ENCODE measurements at regions of chr1 and their contacts with region 1.

Region 1: GRCh38 chr1:211514030-211514754 is 22.2 kb upstream of the RD3 start:
- DNase-seq: peak; percentile 99
- H3K4me3 Mint-ChIP-seq: no peak overlapping the region
- H3K27ac Mint-ChIP-seq: peak overlapping the region; percentile 7
- H3K4me1 Mint-ChIP-seq: peaks cover 41% of the 10 kb centered on the region
- H3K27me3 Mint-ChIP-seq: no peaks in the 10 kb centered on the region
- CTCF ChIP-seq: peak; percentile 96

Region 2: GRCh38 chr1:210407207-210407886 is 1106.8 kb before region 1 on chr1:
- CTCF ChIA-PET with region 1: interaction called, 13 read pairs
- POLR2A ChIA-PET with region 1: no interaction called
- intact Hi-C with region 1: loop called (anchors 2 kb)
- DNase-seq: peak; percentile 84
- H3K4me3 Mint-ChIP-seq: no peak overlapping the region
- H3K27ac Mint-ChIP-seq: no peak overlapping the region
- H3K4me1 Mint-ChIP-seq: no peaks in the 10 kb centered on the region
- H3K27me3 Mint-ChIP-seq: no peaks in the 10 kb centered on the region
- CTCF ChIP-seq: peak; percentile 100

Region 3: DNA sequence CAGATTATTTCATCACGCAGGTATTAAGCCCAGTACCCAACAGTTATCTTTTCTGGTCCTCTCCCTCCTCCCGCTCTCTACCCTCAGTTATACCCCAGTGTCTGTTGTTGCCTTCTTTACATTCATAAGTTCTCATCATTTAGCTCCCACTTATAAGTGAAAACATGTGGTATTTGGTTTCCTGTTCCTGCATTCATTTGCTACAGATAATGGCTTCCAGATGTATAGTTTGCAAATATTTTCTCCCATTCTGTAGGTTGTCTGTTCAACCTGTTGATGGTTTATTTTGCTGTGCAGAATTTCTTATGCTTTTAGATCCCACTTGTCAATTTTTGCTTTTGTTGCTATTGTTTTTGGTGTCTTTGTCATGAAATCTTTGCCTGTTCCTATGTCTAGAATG is 359.2 kb before region 1 on chr1:
- CTCF ChIA-PET with region 1: no interaction called
- POLR2A ChIA-PET with region 1: no interaction called
- intact Hi-C with region 1: loop called (anchors 5 kb)
- DNase-seq: no peak
- H3K4me3 Mint-ChIP-seq: no peak overlapping the region
- H3K27ac Mint-ChIP-seq: no peak overlapping the region
- H3K4me1 Mint-ChIP-seq: no peaks in the 10 kb centered on the region
- H3K27me3 Mint-ChIP-seq: peaks cover 23% of the 10 kb centered on the region
- CTCF ChIP-seq: no peak

Region 4: GRCh38 chr1:211352985-211353515 is 161.1 kb before region 1 on chr1:
- CTCF ChIA-PET with region 1: interaction called, 13 read pairs
- POLR2A ChIA-PET with region 1: no interaction called
- intact Hi-C with region 1: no loop called
- DNase-seq: peak; percentile 78
- H3K4me3 Mint-ChIP-seq: no peak overlapping the region
- H3K27ac Mint-ChIP-seq: no peak overlapping the region
- H3K4me1 Mint-ChIP-seq: peaks cover 15% of the 10 kb centered on the region
- H3K27me3 Mint-ChIP-seq: no peaks in the 10 kb centered on the region
- CTCF ChIP-seq: peak; percentile 93

Region 5: GRCh38 chr1:211501711-211502400 is 12.3 kb before region 1 on chr1:
- CTCF ChIA-PET with region 1: interaction called, 111 read pairs
- POLR2A ChIA-PET with region 1: interaction called, 4 read pairs
- intact Hi-C with region 1: no loop called
- DNase-seq: no peak
- H3K4me3 Mint-ChIP-seq: no peak overlapping the region
- H3K27ac Mint-ChIP-seq: no peak overlapping the region
- H3K4me1 Mint-ChIP-seq: no peaks in the 10 kb centered on the region
- H3K27me3 Mint-ChIP-seq: no peaks in the 10 kb centered on the region
- CTCF ChIP-seq: no peak

Region 6: DNA sequence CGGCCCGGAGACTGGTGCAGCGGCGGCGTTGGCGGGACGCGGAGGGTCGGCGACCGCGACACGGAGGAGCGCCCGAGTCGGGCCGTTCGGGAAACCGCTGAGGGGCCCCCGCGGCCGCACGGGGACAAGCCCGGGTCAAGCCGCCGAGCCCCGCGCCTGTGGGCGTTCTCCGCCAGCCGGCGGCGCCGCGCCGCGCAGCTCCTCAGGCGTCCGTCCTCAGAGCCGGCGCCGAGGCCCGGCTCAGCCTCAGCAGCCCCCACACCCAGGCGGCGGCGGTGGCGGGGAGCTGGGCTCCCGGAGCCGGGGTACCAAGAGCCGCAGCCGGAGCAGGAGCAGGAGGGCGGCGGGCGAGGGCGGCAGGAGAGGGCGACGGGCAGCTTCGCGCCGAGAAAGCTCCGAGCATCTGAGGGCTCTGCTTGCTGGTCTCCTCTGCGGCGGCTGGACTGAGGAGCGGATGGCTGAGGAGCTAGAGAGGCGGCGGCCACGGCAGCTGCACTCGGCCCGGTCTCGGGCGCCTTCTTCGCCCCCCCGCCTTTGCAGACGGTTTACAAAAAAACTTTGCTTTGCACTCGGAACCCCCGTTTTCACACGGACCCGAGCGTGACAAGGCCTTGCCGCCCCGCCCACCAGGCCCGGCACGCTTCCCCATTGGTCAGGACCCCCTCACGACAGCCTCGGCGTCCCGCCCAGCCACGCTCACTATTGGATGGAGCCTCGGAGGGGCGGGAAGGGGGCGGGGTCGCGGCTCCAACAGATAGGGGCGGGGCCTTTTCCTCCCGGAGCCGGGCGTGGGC is 64.6 kb after region 1 on chr1 and contains the start of gene SLC30A1:
- CTCF ChIA-PET with region 1: interaction called, 31 read pairs
- POLR2A ChIA-PET with region 1: interaction called, 24 read pairs
- intact Hi-C with region 1: loop called (anchors 1 kb)
- DNase-seq: peak; percentile 100
- H3K4me3 Mint-ChIP-seq: peak within 1 kb of the TSS; percentile 89
- H3K27ac Mint-ChIP-seq: peak within 1 kb of the TSS; percentile 96
- H3K4me1 Mint-ChIP-seq: peaks cover 48% of the 10 kb centered on the region
- H3K27me3 Mint-ChIP-seq: no peaks in the 10 kb centered on the region
- CTCF ChIP-seq: no peak
- total RNA-seq, gene SLC30A1: 87.0 and 94.1 TPM in 2 replicates

Region 7: DNA sequence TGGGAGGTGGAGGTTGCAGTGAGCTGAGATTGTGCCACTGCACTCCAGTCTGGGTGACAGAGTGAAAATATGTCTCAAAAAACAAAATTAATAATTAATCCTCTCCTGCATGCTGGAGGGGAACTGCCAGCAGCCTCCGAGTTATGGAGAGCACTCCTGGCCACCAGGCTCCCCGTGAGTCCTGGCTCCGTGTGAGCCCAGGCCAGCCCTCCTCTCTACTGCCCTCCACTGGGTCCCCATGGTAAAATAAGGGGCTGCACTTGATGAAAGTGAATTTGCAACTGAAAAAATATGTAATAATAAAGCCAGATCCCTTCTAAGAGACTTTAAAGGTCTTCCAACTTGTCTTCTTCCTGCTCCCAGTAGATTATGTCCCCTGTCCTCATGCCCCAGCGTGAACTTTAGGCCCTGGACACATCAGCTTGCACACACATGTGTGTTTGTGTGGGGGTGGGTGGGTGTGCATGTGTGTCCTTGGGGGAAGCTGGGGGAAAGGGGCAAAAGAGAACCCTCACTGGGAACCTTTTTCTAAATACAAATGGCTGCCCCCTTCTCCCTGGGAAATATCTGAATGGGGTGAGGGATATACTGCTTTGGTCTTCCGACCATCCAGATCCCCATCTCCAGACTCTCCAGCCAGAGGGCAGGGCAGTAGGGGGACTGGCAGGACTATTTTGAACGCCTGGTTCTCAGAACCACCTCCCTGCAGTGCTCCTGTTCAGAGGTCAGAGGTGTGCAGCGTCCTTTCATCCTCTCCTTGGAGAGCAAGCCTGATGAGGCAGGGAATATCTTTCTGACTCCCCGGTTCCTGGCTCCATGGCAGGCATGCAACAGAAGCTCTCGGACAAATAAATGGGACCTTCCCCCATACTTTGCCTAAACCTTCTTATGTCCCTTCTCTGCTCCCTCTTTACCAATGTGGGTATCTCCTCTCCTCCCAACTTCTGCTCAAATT is 135.1 kb after region 1 on chr1:
- CTCF ChIA-PET with region 1: interaction called, 418 read pairs
- POLR2A ChIA-PET with region 1: interaction called, 19 read pairs
- intact Hi-C with region 1: no loop called
- DNase-seq: no peak
- H3K4me3 Mint-ChIP-seq: no peak overlapping the region
- H3K27ac Mint-ChIP-seq: peak overlapping the region; percentile 1
- H3K4me1 Mint-ChIP-seq: peaks cover 37% of the 10 kb centered on the region
- H3K27me3 Mint-ChIP-seq: no peaks in the 10 kb centered on the region
- CTCF ChIP-seq: peak; percentile 22

Measured in MCF 10A (cell line).